Psoas muscle (tissue), 8 donors: ENCODE measurements at regions of chr3 and their contacts with region 1.

Region 1: DNA sequence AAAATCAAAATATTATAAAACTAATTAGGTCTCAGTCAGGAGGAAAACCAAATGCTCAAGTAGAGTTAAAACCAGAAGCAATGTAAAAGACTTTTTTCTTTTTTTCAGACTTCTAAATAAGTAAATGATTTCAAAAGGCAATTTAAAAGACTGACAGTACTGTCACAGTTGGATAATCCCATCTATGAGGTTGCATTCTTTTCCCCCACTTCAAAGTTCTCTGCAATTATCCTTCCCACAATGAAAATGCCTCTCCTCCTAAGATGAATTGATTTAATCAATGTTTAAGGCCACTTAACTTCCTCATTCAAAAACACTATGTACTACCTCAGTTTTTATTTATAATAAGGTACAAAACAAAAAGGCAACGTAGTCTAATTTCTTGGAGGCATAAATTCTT is 8.1 kb downstream of the MRPL3 start:
- DNase-seq: no peak
- ATAC-seq: no peak
- H3K4me3 ChIP-seq: no peak overlapping the region
- H3K27ac ChIP-seq: no peak overlapping the region
- H3K4me1 ChIP-seq: no peaks in the 10 kb centered on the region
- H3K27me3 ChIP-seq: no peaks in the 10 kb centered on the region
- CTCF ChIP-seq: no peak

Region 2: GRCh38 chr3:131303848-131304247 is 190.9 kb before region 1 on chr3:
- intact Hi-C with region 1: no loop called
- DNase-seq: no peak
- ATAC-seq: no peak
- H3K4me3 ChIP-seq: no peak overlapping the region
- H3K27ac ChIP-seq: no peak overlapping the region
- H3K4me1 ChIP-seq: no peaks in the 10 kb centered on the region
- H3K27me3 ChIP-seq: peaks cover 0 to 8% (median 0%) of the 10 kb centered on the region in 3 donors
- CTCF ChIP-seq: no peak

Region 3: GRCh38 chr3:131381444-131382291 is 113.0 kb before region 1 on chr3 and contains the start of gene NUDT16:
- intact Hi-C with region 1: loop called in 1 of 2 experiments (anchors 10 kb)
- DNase-seq: peak; percentile 100
- ATAC-seq: peak; percentile 97 to 100 (median 100)
- H3K4me3 ChIP-seq: peak within 1 kb of the TSS; percentile 87
- H3K27ac ChIP-seq: peak within 1 kb of the TSS; percentile 86
- H3K4me1 ChIP-seq: peaks cover 11% of the 10 kb centered on the region
- H3K27me3 ChIP-seq: no peaks in the 10 kb centered on the region
- CTCF ChIP-seq: no peak
- total RNA-seq, gene NUDT16: 9.0 to 25.9 (median 11.4) TPM